MCF 10A (cell line): ENCODE measurements at regions of chr18 and their contacts with region 1.

Region 1: DNA sequence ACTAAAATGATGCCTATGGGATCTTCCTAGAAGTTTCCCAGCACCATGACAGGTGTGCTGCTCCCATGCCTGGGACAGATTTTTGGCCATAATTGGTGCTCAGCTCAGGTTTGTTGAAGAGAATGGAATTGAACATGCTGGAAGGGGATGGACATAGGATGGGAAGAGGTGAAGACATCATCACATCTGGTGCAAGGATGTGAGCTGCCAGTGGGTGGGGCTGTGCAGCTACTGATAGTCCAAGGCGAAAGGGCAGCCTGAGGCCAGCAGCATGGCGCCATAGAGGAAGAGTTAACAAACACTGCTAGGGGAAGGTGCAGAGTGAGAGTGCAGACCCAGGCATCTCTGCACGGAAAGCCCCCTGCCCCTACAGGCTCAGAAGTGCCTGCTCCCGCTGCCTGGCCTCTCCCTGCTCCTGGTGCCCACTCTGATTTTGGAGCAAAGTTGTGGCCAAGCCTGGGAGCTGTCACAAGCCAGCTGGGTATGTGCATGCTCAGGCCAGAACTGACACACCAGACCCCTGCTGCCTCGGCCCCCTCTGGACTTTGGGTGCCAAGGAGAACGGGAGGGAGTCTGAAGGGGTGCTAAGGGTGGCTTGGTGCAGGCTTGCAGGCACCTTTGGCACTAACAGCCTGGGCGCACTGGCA is 178.6 kb downstream of the ZBTB7C start:
- DNase-seq: peak; percentile 78
- H3K4me3 Mint-ChIP-seq: no peak overlapping the region
- H3K27ac Mint-ChIP-seq: no peak overlapping the region
- H3K4me1 Mint-ChIP-seq: peaks cover 29% of the 10 kb centered on the region
- H3K27me3 Mint-ChIP-seq: peaks cover 8% of the 10 kb centered on the region
- CTCF ChIP-seq: peak; percentile 69

Region 2: DNA sequence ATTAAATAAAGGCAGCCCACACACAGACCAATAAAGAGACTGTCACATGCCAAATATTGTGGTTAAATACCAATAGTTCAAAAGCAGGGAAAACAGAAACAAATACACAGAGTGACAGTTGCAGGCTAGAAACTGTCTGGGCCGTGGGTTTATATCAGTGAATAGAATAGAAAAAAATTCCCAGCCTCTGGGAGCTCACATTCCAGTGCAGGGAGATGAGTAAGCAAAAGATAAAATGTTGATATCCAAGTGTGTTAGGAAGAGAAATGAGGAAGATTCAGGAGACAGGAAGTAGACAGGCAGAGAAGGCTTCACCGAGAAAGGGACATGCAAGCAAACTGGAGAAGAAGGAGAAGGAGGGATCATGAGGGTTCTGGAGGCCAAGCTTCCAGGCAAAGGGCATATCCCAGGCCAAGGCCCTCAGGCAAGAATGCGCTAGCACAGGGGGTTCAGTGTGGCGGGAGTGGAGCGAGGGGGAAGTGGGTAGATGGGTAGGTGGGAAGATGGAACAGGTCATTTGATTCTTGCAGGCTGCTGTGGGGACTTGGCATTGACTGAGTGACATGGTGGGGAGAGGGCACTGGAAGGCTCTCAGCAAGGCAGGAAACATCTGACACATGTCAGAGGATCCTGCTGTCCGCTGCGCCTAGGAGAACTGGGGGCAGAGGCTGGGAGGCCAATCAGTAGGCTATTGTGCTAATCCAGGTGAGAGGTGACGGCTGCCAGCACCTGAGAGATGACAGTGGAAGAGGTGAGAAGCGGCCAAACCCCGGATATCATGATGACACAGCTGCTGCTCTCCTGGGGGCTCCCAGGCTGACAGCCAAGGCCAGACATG is 89.4 kb after region 1 on chr18:
- CTCF ChIA-PET with region 1: no interaction called
- POLR2A ChIA-PET with region 1: no interaction called
- intact Hi-C with region 1: no loop called
- DNase-seq: no peak
- H3K4me3 Mint-ChIP-seq: no peak overlapping the region
- H3K27ac Mint-ChIP-seq: peak overlapping the region; percentile 5
- H3K4me1 Mint-ChIP-seq: peaks cover 18% of the 10 kb centered on the region
- H3K27me3 Mint-ChIP-seq: no peaks in the 10 kb centered on the region
- CTCF ChIP-seq: no peak

Region 3: DNA sequence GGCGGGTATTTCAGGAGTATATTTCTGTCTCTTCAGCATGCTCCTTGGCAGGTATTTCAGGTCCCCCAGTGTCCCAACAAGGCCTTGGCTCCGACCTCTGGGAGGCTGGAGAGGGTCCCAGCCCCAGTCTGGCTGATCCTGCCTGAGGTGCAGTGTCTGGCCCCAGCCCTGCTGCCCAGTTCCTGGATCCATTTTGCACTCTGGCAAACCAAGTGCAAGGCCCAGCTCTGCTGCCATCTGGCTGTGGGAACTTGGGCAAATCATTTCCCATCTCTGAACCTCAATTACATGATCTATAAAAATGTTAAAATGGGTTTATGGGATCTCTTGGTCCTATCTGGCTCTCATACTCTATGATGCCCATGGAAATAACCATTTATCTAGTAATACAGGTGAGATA is 115.0 kb after region 1 on chr18:
- CTCF ChIA-PET with region 1: interaction called, 6 read pairs
- POLR2A ChIA-PET with region 1: no interaction called
- intact Hi-C with region 1: loop called (anchors 1 kb)
- DNase-seq: peak; percentile 55
- H3K4me3 Mint-ChIP-seq: no peak overlapping the region
- H3K27ac Mint-ChIP-seq: no peak overlapping the region
- H3K4me1 Mint-ChIP-seq: peaks cover 10% of the 10 kb centered on the region
- H3K27me3 Mint-ChIP-seq: no peaks in the 10 kb centered on the region
- CTCF ChIP-seq: peak; percentile 55

Region 4: DNA sequence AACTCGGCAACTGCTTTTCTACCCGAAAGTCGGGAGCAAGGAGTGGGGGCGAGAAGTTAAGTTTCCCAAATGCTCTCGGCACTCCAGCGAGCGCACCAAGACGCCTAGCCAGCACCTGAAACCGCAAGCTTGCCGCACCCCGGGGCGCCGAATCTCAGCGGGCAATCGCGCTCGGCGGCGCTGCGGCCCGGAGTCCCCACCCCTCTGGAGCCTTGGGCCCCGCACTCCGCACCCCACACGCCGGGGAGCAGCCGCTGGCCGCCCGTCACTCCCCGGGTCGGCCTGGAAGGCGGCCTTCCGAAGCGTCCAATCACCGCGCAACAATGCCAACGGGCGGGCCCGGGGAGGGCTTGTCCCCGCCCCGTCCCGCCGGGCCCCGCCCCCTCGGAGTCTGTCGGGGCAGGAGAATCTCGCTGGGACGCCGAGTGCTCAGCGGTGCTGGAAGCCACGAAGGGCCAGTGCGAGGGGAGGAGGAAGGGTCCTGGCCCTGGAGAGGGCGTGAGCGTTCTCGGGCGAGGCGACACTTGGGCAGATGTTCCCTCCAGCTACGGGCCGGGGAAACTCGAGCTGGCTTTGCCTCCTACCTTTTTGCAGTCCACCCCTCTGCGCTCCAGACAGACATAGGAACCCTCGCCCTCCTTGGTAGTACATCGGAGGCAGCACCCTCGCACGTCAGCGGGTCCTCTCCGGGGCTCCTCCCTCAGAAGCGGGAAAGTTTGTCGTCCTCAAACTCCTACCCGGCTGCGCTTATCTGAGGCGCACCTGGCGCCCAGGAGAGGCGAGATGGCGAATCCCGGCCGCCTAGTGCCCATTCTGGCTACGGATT is 179.7 kb after region 1 on chr18:
- CTCF ChIA-PET with region 1: interaction called, 5 read pairs
- POLR2A ChIA-PET with region 1: no interaction called
- intact Hi-C with region 1: loop called (anchors 1 kb)
- DNase-seq: peak; percentile 92
- H3K4me3 Mint-ChIP-seq: peak overlapping the region; percentile 75
- H3K27ac Mint-ChIP-seq: no peak overlapping the region
- H3K4me1 Mint-ChIP-seq: peaks cover 2% of the 10 kb centered on the region
- H3K27me3 Mint-ChIP-seq: no peaks in the 10 kb centered on the region
- CTCF ChIP-seq: no peak

Region 5: GRCh38 chr18:48470484-48471180 is 240.0 kb after region 1 on chr18:
- CTCF ChIA-PET with region 1: no interaction called
- POLR2A ChIA-PET with region 1: interaction called, 3 read pairs
- intact Hi-C with region 1: loop called (anchors 1 kb)
- DNase-seq: no peak
- H3K4me3 Mint-ChIP-seq: no peak overlapping the region
- H3K27ac Mint-ChIP-seq: no peak overlapping the region
- H3K4me1 Mint-ChIP-seq: peaks cover 5% of the 10 kb centered on the region
- H3K27me3 Mint-ChIP-seq: peaks cover 16% of the 10 kb centered on the region
- CTCF ChIP-seq: no peak